ENCODE measurements at regions of chr17 and their contacts with region 1.

Region 1: GRCh38 chr17:40726919-40727318 is 23.4 kb upstream of the KRT24 start:
- DNase-seq: no peak
- H3K4me3 ChIP-seq: no peak overlapping the region
- H3K27ac ChIP-seq: no peak overlapping the region
- H3K4me1 ChIP-seq: no peaks in the 10 kb centered on the region
- H3K27me3 ChIP-seq: peaks cover 7 to 9% of the 10 kb centered on the region in 2 experiments
- CTCF ChIP-seq: peak in 1 of 2 donors; percentile 13
- POLR2A ChIP-seq: no peak

Region 2: GRCh38 chr17:40510328-40510648 is 216.6 kb before region 1 on chr17:
- CTCF ChIA-PET with region 1: no interaction called
- POLR2A ChIA-PET with region 1: no interaction called
- dilution Hi-C with region 1: no loop called
- intact Hi-C with region 1: no loop called
- DNase-seq: no peak
- H3K4me3 ChIP-seq: no peak overlapping the region
- H3K27ac ChIP-seq: no peak overlapping the region
- H3K4me1 ChIP-seq: no peaks in the 10 kb centered on the region
- H3K27me3 ChIP-seq: peaks cover 0 to 18% of the 10 kb centered on the region in 2 experiments
- CTCF ChIP-seq: no peak
- POLR2A ChIP-seq: no peak

Region 3: GRCh38 chr17:40622509-40622928 is 104.4 kb before region 1 on chr17:
- CTCF ChIA-PET with region 1: interaction called, 5 read pairs
- POLR2A ChIA-PET with region 1: no interaction called
- dilution Hi-C with region 1: no loop called
- intact Hi-C with region 1: loop called (anchors 5 kb)
- DNase-seq: no peak
- H3K4me3 ChIP-seq: no peak overlapping the region
- H3K27ac ChIP-seq: no peak overlapping the region
- H3K4me1 ChIP-seq: no peaks in the 10 kb centered on the region
- H3K27me3 ChIP-seq: no peaks in the 10 kb centered on the region
- CTCF ChIP-seq: no peak
- POLR2A ChIP-seq: no peak

Region 4: DNA sequence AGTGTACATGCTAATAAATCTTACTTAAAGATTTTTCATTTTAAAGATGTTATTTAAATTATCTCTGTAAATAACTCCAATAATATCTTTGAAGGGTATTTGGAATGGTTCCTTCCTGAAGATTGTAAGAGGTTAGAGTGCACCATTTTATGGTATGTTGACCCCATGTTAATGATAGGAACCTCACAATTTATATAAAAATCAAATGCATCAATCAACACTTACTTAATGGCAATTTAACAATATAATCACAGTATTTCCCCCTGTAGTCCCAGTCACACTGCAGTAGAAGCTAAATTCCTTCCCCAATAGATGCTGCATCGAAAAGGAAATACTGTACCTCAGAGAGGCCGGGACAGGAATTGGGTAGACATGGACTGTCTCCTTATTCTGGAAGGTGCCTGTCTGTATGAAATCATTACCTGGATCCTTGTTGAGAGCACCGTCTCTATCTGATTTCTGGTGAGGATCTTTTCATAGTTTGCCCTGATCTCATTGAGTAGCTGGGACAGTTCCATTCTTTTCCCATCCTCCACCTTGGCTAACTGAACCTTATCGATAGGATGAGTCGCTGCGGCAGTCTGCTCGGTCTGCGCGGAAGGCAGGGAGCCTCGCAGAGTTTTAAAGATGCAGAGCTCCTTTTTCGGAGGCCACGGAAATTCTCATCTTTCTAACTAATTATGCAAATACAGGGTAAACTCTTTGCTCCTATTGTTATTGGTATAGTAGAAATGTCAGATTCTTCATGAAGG is 62.2 kb before region 1 on chr17 and contains the start of gene KRT222:
- CTCF ChIA-PET with region 1: no interaction called
- POLR2A ChIA-PET with region 1: no interaction called
- dilution Hi-C with region 1: no loop called
- intact Hi-C with region 1: no loop called
- DNase-seq: no peak
- H3K4me3 ChIP-seq: no peak within 1 kb of the TSS
- H3K27ac ChIP-seq: no peak within 1 kb of the TSS
- H3K4me1 ChIP-seq: no peaks in the 10 kb centered on the region
- H3K27me3 ChIP-seq: peaks cover 19 to 40% of the 10 kb centered on the region in 2 experiments
- CTCF ChIP-seq: no peak
- POLR2A ChIP-seq: no peak
- total RNA-seq, gene KRT222: not detected in 2 replicates

Region 5: DNA sequence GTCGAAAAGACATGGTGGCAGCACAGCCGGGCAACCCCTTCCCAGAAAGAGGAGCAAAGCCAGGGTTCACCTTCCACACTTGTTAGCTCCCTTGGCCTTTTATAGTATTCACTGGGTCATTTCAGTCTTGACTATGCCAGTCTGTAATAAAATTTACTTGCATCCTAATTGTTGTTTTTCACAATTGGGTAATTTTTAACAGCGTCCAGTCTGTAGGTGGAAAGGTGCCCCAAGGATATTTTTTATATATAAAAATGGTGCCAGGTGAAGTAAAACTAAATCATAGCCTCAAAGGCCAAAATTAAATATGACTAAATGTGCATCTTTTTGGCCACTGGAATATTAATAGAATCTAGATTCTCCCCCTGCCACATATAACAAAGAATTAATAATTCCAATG is 45.2 kb after region 1 on chr17 and contains the start of gene KRT26:
- CTCF ChIA-PET with region 1: no interaction called
- POLR2A ChIA-PET with region 1: no interaction called
- dilution Hi-C with region 1: no loop called
- intact Hi-C with region 1: no loop called
- DNase-seq: no peak
- H3K4me3 ChIP-seq: no peak within 1 kb of the TSS
- H3K27ac ChIP-seq: no peak within 1 kb of the TSS
- H3K4me1 ChIP-seq: no peaks in the 10 kb centered on the region
- H3K27me3 ChIP-seq: peaks cover 6 to 9% of the 10 kb centered on the region in 2 experiments
- CTCF ChIP-seq: no peak
- POLR2A ChIP-seq: no peak
- total RNA-seq, gene KRT26: not detected in 2 replicates

Measured in endothelial cell of umbilical vein (primary cell).